Breast epithelium (tissue), 4 donors: ENCODE measurements at regions of chr10 and their contacts with region 1.

Region 1: GRCh38 chr10:95493862-95494261 is 67.3 kb downstream of the SORBS1 start:
- DNase-seq: no peak
- H3K4me3 ChIP-seq: no peak overlapping the region
- H3K27ac ChIP-seq: no peak overlapping the region
- H3K4me1 ChIP-seq: no peaks in the 10 kb centered on the region
- H3K27me3 ChIP-seq: no peaks in the 10 kb centered on the region
- CTCF ChIP-seq: no peak
- POLR2A ChIP-seq: no peak

Region 2: DNA sequence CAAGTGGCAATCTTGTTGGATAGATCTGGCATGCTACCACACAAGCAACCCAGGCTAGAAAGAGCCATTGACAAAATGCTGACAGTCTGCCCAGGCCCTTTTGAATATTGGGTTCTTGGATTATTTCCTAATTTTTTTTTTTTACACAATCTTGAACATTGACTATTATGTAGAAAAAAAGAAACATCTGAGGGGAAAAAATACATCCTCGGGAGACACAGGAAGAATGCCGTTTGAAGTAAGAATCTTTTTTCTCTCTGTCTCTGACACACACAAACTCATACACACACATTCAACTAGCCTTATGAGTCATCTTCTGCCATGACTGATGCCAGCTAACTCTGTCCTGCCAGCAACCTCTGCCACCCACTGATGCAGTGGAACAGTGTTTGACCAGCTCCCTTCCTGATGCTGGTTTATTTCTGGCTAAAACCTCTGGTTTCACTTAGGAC is 20.1 kb after region 1 on chr10:
- intact Hi-C with region 1: loop called (anchors 1 kb)
- DNase-seq: peak in 1 of 2 donors; percentile 74
- H3K4me3 ChIP-seq: no peak overlapping the region
- H3K27ac ChIP-seq: peak overlapping the region; percentile 73 to 80
- H3K4me1 ChIP-seq: peaks cover 5 to 8% of the 10 kb centered on the region in 2 donors
- H3K27me3 ChIP-seq: no peaks in the 10 kb centered on the region
- CTCF ChIP-seq: no peak
- POLR2A ChIP-seq: no peak